Endothelial cell of umbilical vein (primary cell): ENCODE measurements at regions of chr1 and their contacts with region 1.

Region 1: DNA sequence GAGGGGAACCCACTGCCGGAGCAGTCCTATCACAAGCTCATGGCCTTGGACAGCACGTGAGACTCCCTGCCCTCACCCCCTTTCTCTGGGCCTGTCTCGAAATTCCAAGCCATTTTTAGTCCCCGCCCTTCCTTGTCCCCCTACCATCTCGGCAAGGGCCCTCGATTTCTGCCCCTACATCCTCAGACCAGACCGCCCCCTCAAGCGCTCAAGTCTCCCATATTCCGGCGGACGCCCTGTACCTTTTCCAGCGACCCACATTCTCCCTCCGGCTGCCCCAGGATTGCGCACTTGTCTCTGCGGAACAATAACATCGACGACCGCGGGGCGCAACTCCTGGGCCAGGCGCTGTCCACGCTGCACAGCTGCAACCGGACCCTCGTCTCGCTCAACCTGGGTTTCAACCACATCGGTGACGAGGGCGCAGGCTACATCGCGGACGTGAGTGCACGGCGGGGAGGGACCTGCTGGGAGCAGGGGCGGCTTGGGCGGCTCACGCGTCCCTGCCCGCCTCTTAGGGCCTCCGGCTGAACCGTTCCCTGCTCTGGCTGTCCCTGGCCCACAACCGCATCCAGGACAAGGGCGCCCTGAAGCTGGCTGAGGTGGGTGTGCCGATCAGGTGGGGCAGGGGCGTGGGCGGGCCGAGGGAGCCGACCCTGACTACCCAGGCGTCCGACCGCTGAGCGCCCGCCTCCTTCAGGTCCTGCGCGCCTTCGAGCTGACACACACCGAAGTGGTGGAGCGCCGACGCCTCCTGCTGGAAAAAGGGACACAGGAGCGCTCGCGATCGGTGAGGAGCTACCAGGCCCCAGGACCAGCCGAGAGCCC is 7.0 kb downstream of the LRRC71 start:
- DNase-seq: peak; percentile 79
- H3K4me3 ChIP-seq: peak overlapping the region in 1 of 3 experiments; percentile 17
- H3K27ac ChIP-seq: no peak overlapping the region
- H3K4me1 ChIP-seq: peaks cover 2% of the 10 kb centered on the region
- H3K27me3 ChIP-seq: peaks cover 17 to 25% of the 10 kb centered on the region in 2 experiments
- CTCF ChIP-seq: peak; percentile 82 to 93
- POLR2A ChIP-seq: no peak

Region 2: GRCh38 chr1:156797212-156797871 is 130.1 kb before region 1 on chr1:
- CTCF ChIA-PET with region 1: interaction called, 26 read pairs
- POLR2A ChIA-PET with region 1: no interaction called
- dilution Hi-C with region 1: no loop called
- intact Hi-C with region 1: loop called (anchors 1 kb)
- DNase-seq: peak; percentile 75
- H3K4me3 ChIP-seq: no peak overlapping the region
- H3K27ac ChIP-seq: no peak overlapping the region
- H3K4me1 ChIP-seq: no peaks in the 10 kb centered on the region
- H3K27me3 ChIP-seq: no peaks in the 10 kb centered on the region
- CTCF ChIP-seq: peak; percentile 61 to 72
- POLR2A ChIP-seq: no peak

Region 3: DNA sequence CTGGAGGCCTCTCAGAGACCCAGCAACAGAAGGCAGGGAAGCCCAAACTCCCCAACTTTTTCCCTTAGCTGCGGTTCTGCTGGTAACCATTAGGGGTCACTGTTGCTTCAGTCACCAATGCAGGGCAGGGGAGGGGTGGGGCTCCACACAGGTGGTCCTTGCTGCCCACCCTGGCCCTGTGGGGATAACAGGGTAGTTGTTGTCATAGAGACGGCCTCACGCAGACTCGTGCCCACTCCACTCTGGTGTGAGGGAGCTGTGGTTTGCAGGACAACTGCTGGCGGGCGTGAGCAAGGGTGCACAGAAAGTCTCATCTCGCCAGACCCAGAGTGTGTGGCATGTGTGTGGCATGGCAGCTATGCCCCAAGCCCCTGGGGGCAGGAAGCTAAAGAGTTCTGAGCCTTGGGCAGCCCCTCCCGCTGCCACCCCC is 88.4 kb before region 1 on chr1:
- CTCF ChIA-PET with region 1: interaction called, 46 read pairs
- POLR2A ChIA-PET with region 1: no interaction called
- dilution Hi-C with region 1: no loop called
- intact Hi-C with region 1: loop called (anchors 1 kb)
- DNase-seq: peak; percentile 30
- H3K4me3 ChIP-seq: no peak overlapping the region
- H3K27ac ChIP-seq: no peak overlapping the region
- H3K4me1 ChIP-seq: peaks cover 16% of the 10 kb centered on the region
- H3K27me3 ChIP-seq: peaks cover 30 to 41% of the 10 kb centered on the region in 2 experiments
- CTCF ChIP-seq: peak; percentile 82 to 88
- POLR2A ChIP-seq: no peak

Region 4: DNA sequence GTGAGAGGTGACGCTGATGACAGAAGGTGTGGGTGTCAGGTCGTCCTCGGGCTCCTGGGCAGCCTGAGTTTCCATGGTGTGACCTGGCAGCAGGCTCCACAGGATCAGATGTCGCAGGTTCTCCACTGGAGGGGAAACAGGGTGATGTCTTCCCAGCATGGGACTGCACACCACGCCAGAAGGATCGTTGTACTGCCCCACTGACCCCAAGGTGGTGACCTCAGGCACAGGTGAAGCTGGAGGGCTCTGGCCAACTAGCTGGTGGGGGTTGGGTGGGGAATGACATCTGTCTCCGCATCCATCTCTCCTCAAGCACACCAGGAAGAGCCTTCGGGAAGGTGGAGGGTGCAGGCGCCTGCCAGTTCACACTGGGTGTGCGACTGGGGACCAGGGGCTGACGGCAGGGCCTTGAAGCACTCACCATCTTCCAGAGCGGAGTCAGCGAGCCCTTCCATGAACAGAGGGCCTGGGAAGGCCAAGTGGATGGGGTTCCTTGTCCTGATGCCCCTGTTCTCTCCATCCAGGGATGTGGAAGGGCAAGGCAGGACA is 12.4 kb after region 1 on chr1:
- CTCF ChIA-PET with region 1: interaction called, 11 read pairs
- POLR2A ChIA-PET with region 1: no interaction called
- dilution Hi-C with region 1: no loop called
- intact Hi-C with region 1: no loop called
- DNase-seq: no peak
- H3K4me3 ChIP-seq: no peak overlapping the region
- H3K27ac ChIP-seq: no peak overlapping the region
- H3K4me1 ChIP-seq: no peaks in the 10 kb centered on the region
- H3K27me3 ChIP-seq: no peaks in the 10 kb centered on the region
- CTCF ChIP-seq: no peak
- POLR2A ChIP-seq: no peak

Region 5: DNA sequence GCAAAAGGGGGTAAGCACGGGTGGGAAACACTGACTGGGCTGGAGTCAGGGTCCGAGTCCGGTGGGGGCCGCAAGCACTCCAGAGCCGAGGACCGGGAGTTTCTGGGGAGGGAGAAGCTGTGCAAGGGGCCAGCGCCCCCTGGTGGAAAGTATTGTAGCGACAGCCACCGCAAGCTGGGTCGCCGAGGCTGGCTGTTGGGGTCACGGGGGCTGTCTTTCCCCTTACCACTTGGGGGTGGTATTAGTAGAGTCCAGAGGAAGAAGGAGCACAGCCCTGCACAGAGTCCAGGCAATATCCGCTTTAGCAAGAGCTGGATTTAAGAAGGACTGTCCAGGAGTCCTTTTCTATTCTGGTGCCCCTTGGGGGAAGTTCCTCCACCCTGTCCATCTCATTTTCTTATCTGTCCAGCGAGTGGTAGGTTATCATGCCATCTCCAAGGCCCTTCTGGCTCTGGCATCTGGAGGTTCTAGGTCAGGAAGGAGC is 228.7 kb after region 1 on chr1:
- CTCF ChIA-PET with region 1: no interaction called
- POLR2A ChIA-PET with region 1: no interaction called
- dilution Hi-C with region 1: no loop called
- intact Hi-C with region 1: loop called (anchors 5 kb)
- DNase-seq: peak; percentile 60
- H3K4me3 ChIP-seq: no peak overlapping the region
- H3K27ac ChIP-seq: no peak overlapping the region
- H3K4me1 ChIP-seq: peaks cover 23% of the 10 kb centered on the region
- H3K27me3 ChIP-seq: peaks cover 5 to 7% of the 10 kb centered on the region in 2 experiments
- CTCF ChIP-seq: peak; percentile 86 to 93
- POLR2A ChIP-seq: no peak